ENCODE measurements at regions of chr11 and their contacts with region 1.

Region 1: DNA sequence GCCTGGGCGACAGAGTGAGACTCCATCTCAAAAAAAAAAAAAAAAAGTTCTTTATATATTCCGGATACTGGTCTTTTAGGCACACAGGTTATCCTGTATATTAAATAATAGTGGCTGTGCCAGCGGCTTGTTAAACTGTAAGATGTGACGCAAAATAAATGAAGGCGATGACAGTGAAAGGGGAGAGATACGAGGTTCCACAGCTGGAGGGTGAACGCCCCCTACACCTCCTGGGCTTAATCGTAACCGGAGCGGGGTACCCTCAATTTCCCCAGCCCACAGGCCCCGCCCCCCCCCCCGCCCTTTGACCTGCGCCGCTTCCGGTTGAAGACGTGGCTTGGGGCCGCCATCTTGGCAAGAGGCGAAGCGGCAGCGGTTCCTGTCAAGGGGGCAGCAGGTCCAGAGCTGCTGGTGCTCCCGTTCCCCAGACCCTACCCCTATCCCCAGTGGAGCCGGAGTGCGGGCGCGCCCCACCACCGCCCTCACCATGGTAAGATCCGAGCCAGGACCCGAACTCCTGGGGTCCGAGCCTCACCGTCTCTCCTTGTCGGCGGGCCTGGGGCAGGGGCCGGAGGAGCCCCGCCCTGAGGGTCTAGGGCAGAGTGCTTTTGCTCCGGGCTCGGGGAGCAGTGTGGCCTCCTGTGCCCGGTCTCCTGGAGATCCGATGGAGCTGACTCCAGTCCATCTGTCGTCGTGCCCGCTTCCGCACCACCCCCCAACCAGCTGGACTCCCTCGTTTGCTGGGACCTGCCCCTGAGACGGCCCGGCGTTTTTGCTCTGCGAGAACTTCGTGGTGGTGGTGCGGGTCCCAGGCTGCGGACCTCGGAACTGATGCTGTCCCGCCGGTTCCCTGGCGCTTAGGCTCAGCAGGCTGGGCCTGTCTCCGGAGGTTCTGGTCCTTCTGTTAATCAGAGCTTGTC is at the start of gene ARCN1:
- H3K4me3 Mint-ChIP-seq: peak within 1 kb of the TSS; percentile 95
- H3K27ac Mint-ChIP-seq: peak within 1 kb of the TSS; percentile 95
- H3K4me1 Mint-ChIP-seq: peaks cover 41% of the 10 kb centered on the region
- H3K27me3 Mint-ChIP-seq: no peaks in the 10 kb centered on the region

Region 2: DNA sequence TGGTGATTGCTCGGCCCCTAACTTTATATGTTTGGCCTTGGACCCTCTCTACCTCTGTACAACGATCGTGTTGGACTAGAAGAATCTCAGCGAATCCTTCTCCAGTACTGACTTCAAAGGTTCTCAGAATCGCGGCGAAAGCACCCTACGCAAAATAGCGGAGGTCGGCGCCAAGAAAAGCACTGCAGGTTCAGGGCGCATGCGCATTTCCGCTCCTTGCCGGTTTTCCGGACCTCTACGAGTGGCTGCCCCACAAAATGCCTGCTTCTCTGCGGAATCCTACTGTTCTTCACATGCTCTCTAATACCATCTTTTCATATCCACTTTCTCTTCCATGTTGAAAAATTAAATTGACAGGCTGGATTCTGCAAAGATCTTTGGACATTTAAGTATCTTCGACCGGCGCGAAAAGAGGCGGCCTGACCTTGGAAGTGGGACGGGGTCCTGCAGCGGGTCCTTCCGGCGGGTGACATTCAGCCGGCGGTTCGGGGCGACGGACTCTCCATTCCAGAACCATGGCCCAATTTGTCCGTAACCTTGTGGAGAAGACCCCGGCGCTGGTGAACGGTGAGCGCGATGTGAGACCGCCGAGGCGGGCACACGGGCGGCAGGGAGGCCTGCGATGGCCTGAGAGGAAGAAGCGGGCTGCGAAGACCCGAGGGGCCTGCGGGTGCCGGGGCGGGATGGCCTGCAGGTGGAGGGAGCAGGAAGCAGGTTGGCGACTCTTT is 171.0 kb before region 1 on chr11 and contains the start of gene ATP5MG:
- intact Hi-C with region 1: loop called (anchors 5 kb)
- H3K4me3 Mint-ChIP-seq: peak within 1 kb of the TSS; percentile 89
- H3K27ac Mint-ChIP-seq: peak within 1 kb of the TSS; percentile 98
- H3K4me1 Mint-ChIP-seq: peaks cover 38% of the 10 kb centered on the region
- H3K27me3 Mint-ChIP-seq: no peaks in the 10 kb centered on the region

Region 3: GRCh38 chr11:118435893-118436624 is 136.3 kb before region 1 on chr11 and contains the start of gene KMT2A:
- intact Hi-C with region 1: loop called (anchors 2 kb)
- H3K4me3 Mint-ChIP-seq: peak within 1 kb of the TSS; percentile 96
- H3K27ac Mint-ChIP-seq: peak within 1 kb of the TSS; percentile 74
- H3K4me1 Mint-ChIP-seq: peaks cover 54% of the 10 kb centered on the region
- H3K27me3 Mint-ChIP-seq: peaks cover 16% of the 10 kb centered on the region

Region 4: DNA sequence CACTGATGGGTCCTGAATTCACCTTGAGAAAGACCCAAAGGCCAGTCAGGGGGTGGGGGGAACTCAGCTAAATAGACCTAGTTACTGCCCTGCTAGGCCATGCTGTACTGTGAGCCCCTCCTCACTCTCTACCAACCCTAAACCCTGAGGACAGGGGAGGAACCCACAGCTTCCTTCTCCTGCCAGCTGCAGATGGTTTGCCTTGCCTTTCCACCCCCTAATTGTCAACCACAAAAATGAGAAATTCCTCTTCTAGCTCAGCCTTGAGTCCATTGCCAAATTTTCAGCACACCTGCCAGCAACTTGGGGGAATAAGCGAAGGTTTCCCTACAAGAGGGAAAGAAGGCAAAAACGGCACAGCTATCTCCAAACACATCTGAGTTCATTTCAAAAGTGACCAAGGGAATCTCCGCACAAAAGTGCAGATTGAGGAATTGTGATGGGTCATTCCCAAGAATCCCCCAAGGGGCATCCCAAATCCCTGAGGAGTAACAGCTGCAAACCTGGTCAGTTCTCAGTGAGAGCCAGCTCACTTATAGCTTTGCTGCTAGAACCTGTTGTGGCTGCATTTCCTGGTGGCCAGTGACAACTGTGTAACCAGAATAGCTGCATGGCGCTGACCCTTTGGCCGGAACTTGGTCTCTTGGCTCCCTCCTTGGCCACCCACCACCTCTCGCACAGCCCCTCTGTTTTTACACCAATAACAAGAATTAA is 47.4 kb before region 1 on chr11:
- intact Hi-C with region 1: loop called (anchors 2 kb)
- H3K4me3 Mint-ChIP-seq: peak overlapping the region; percentile 30
- H3K27ac Mint-ChIP-seq: peak overlapping the region; percentile 58
- H3K4me1 Mint-ChIP-seq: peaks cover 49% of the 10 kb centered on the region
- H3K27me3 Mint-ChIP-seq: peaks cover 16% of the 10 kb centered on the region